Naive thymus-derived CD4-positive, alpha-beta T cell (primary cell): ENCODE measurements at regions of chr12 and their contacts with region 1.

Region 1: DNA sequence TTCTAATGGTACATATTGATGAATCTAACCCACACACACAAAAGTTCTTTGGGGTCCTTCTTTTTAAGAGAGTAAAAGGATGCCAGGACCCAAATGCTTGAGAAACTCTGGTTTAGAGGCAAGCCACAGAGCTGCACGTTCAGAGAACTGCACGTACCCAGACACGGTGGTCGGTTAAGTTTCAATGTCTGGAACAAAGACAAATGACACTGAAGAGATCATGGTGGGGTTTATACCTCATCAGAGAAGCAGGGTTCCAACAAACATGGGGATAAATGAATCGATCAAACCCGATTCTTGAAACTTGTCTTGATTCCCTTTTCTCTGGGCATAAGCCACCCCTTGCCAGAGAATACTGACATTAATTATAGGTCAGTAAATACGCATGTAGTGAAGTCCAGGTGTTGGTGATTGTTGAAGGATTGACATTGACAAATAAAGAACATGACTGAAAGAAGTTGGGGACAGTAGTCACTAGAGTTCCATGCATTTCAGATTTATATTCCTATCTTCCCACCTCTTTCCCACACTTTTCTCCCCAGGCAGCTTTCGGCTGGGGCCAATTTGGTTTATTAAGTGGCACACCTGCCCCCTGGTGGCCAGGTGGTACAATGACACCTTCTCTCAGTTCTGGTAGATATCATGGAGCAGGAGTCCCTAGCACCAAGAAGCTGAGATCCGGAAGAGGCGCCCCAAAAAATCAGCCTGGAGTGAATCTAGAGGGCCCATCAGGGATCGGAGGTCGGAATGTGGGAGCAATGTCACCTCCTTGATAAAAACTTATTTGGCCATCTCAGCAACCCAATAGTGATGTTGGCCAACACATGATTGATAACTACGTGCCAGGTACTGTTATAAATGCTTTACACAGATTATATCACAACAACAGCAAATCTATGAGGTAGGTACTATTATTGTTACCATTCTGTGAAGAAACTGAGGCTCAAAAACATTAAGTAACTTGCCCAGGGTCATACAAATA is 17.8 kb upstream of the HDAC7 start:
- DNase-seq: peak; percentile 52 to 80 (median 65)
- ATAC-seq: peak; percentile 68
- H3K4me3 ChIP-seq: no peak overlapping the region
- H3K4me3 Mint-ChIP-seq: no peak overlapping the region
- H3K27ac ChIP-seq: no peak overlapping the region
- H3K27ac Mint-ChIP-seq: peak overlapping the region in 8 of 9 donors; percentile 35 to 97 (median 76)
- H3K4me1 ChIP-seq: peaks cover 19 to 52% of the 10 kb centered on the region in 2 donors
- H3K4me1 Mint-ChIP-seq: peaks cover 38 to 71% (median 55%) of the 10 kb centered on the region in 7 donors
- H3K27me3 ChIP-seq: no peaks in the 10 kb centered on the region
- H3K27me3 Mint-ChIP-seq: no peaks in the 10 kb centered on the region

Region 2: DNA sequence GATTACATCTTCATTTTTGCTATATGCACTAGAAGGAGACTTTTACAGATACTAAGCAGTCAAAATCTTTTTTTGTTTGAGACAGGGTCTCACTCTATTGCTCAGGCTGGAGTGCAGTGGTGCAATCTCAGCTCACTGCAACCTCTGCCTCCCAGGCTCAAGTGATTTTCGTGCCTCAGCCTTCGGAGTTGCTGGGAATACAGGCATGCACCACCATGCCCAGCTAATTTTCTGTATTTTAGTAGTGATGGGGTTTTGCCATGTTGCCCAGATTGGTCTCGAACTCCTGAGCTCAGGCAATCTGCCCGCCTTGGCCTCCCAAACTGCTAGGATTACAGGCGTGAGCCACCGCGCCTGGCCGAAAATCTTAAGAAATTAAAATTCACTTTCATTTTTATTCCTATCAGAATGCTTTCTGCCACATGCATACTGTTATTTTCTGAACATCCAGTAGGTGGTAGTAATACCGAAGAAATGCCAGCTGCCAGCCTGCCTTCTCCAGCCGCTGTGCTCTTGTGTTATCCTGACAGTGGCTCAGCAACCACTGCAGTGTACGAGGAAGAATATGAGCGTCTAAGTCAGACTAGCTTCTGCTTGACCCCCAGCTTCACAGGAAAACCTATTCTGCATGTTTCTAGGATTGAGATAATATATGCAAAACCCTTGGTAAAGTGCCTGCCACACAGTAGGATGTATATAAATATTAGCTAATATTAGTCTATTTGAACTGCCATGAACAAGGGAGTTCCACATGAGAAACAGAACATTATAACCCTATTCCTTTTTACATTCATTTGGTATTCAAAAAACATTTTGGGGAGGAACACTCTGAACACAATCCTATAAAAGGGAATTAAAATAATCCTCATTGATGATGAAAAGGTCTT is 185.9 kb before region 1 on chr12:
- CTCF ChIA-PET with region 1: interaction called, 6 read pairs
- POLR2A ChIA-PET with region 1: no interaction called
- intact Hi-C with region 1: loop called (anchors 1 to 5 kb)
- DNase-seq: peak in 8 of 9 donors; percentile 39 to 69 (median 56)
- ATAC-seq: peak; percentile 97
- H3K4me3 ChIP-seq: peak overlapping the region; percentile 38
- H3K4me3 Mint-ChIP-seq: peak overlapping the region; percentile 21 to 75 (median 44)
- H3K27ac ChIP-seq: peak overlapping the region; percentile 9
- H3K27ac Mint-ChIP-seq: peak overlapping the region in 8 of 9 donors; percentile 11 to 94 (median 64)
- H3K4me1 ChIP-seq: peaks cover 5 to 6% of the 10 kb centered on the region in 2 donors
- H3K4me1 Mint-ChIP-seq: peaks cover 8 to 21% (median 16%) of the 10 kb centered on the region in 7 donors
- H3K27me3 ChIP-seq: no peaks in the 10 kb centered on the region
- H3K27me3 Mint-ChIP-seq: no peaks in the 10 kb centered on the region

Region 3: DNA sequence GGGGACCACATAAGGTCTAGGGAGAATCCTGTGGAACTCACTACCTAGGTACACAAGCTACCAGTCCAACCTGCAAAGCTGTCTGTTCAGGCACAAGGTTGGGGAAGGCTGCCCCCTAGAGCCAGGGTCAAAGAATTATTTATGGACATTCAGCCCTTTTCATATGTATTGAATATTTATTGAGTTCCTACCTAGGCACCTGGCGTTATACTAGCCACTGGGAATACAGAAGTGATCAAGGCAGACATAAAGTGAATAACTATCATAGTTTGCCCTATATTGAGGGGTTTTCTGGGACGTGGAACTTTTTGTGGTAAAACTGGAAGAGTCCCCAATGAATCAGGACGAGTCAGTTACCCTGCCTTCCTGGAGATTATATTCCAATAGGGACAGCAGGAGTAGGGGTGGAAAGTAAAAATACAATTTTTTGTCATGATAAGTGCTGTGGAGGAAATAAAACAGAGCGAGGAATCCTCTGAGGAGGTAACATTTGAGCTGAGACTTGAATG is 70.2 kb before region 1 on chr12:
- CTCF ChIA-PET with region 1: interaction called, 167 read pairs
- POLR2A ChIA-PET with region 1: interaction called, 5 read pairs
- intact Hi-C with region 1: loop called in 1 of 2 experiments (anchors 1 kb)
- DNase-seq: peak; percentile 40 to 73 (median 57)
- ATAC-seq: peak; percentile 81
- H3K4me3 ChIP-seq: no peak overlapping the region
- H3K4me3 Mint-ChIP-seq: no peak overlapping the region
- H3K27ac ChIP-seq: no peak overlapping the region
- H3K27ac Mint-ChIP-seq: no peak overlapping the region
- H3K4me1 ChIP-seq: peaks cover 3 to 10% of the 10 kb centered on the region in 2 donors
- H3K4me1 Mint-ChIP-seq: peaks cover 0 to 16% (median 5%) of the 10 kb centered on the region in 7 donors
- H3K27me3 ChIP-seq: no peaks in the 10 kb centered on the region
- H3K27me3 Mint-ChIP-seq: peaks cover 0 to 13% (median 0%) of the 10 kb centered on the region in 5 donors

Region 4: GRCh38 chr12:47779301-47779942 is 58.1 kb before region 1 on chr12:
- CTCF ChIA-PET with region 1: interaction called, 167 read pairs
- POLR2A ChIA-PET with region 1: interaction called, 19 read pairs
- intact Hi-C with region 1: loop called (anchors 1 kb)
- DNase-seq: peak; percentile 77 to 96 (median 88)
- ATAC-seq: peak; percentile 95
- H3K4me3 ChIP-seq: no peak overlapping the region
- H3K4me3 Mint-ChIP-seq: no peak overlapping the region
- H3K27ac ChIP-seq: no peak overlapping the region
- H3K27ac Mint-ChIP-seq: peak overlapping the region; percentile 35 to 82 (median 60)
- H3K4me1 ChIP-seq: no peaks in the 10 kb centered on the region
- H3K4me1 Mint-ChIP-seq: peaks cover 19 to 46% (median 25%) of the 10 kb centered on the region in 7 donors
- H3K27me3 ChIP-seq: no peaks in the 10 kb centered on the region
- H3K27me3 Mint-ChIP-seq: no peaks in the 10 kb centered on the region

Region 5: GRCh38 chr12:47819896-47820630 is 17.4 kb before region 1 on chr12 and contains the start of gene HDAC7:
- CTCF ChIA-PET with region 1: interaction called, 539 read pairs
- POLR2A ChIA-PET with region 1: interaction called, 364 read pairs
- intact Hi-C with region 1: loop called (anchors 1 kb)
- DNase-seq: peak; percentile 54 to 79 (median 69)
- ATAC-seq: peak; percentile 76
- H3K4me3 ChIP-seq: peak within 1 kb of the TSS; percentile 82
- H3K4me3 Mint-ChIP-seq: peak within 1 kb of the TSS; percentile 86 to 99 (median 96)
- H3K27ac ChIP-seq: peak within 1 kb of the TSS; percentile 88
- H3K27ac Mint-ChIP-seq: peak within 1 kb of the TSS; percentile 96 to 99 (median 97)
- H3K4me1 ChIP-seq: peaks cover 55 to 73% of the 10 kb centered on the region in 2 donors
- H3K4me1 Mint-ChIP-seq: peaks cover 75 to 87% (median 82%) of the 10 kb centered on the region in 7 donors
- H3K27me3 ChIP-seq: no peaks in the 10 kb centered on the region
- H3K27me3 Mint-ChIP-seq: no peaks in the 10 kb centered on the region
- total RNA-seq, gene HDAC7: 150 to 194 (median 188) TPM

Region 6: DNA sequence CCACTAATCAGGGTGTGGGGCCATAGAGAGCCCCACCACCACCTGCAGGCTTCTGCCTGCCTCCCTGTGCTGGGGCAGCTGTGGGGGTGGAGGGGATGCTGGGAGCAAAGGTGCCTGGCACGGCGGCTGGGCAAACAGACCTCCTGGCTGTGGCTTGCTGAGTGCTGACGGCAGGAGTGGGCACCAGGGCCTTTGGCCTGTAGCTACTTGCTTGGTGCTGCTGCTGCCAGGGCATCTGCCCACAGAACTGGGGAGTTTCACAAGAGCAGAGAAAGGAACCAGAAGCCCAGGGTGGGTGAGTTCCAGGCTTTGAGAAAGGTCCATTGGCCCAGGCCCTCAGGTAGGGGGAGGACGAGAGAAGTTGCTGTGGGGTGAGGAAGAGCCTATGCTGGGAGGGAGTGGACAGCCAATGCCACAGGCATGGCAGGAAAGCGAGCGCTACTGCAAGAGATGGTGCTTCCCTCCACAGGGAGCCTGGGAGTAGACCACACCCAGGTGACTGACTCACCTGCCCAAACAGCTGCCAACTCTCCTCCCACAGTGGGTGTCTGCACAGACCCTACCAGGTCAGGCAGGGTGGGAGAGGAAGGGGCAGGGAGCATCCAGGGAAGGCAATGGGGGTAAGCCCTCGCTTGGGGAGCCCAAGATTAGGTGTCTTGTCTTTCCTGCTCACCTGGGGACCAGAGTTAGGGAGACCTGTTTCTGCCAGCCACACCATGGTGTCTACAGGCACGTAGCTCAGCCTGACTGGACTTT is 21.2 kb after region 1 on chr12:
- CTCF ChIA-PET with region 1: no interaction called
- POLR2A ChIA-PET with region 1: no interaction called
- intact Hi-C with region 1: no loop called
- DNase-seq: no peak
- ATAC-seq: no peak
- H3K4me3 ChIP-seq: no peak overlapping the region
- H3K4me3 Mint-ChIP-seq: no peak overlapping the region
- H3K27ac ChIP-seq: no peak overlapping the region
- H3K27ac Mint-ChIP-seq: peak overlapping the region in 1 of 9 donors; percentile 7
- H3K4me1 ChIP-seq: no peaks in the 10 kb centered on the region
- H3K4me1 Mint-ChIP-seq: peaks cover 0 to 46% (median 4%) of the 10 kb centered on the region in 7 donors
- H3K27me3 ChIP-seq: no peaks in the 10 kb centered on the region
- H3K27me3 Mint-ChIP-seq: no peaks in the 10 kb centered on the region

Region 7: GRCh38 chr12:47920913-47921312 is 83.4 kb after region 1 on chr12:
- CTCF ChIA-PET with region 1: no interaction called
- POLR2A ChIA-PET with region 1: no interaction called
- intact Hi-C with region 1: no loop called
- DNase-seq: peak in 1 of 9 donors; percentile 11
- ATAC-seq: no peak
- H3K4me3 ChIP-seq: no peak overlapping the region
- H3K4me3 Mint-ChIP-seq: no peak overlapping the region
- H3K27ac ChIP-seq: no peak overlapping the region
- H3K27ac Mint-ChIP-seq: no peak overlapping the region
- H3K4me1 ChIP-seq: no peaks in the 10 kb centered on the region
- H3K4me1 Mint-ChIP-seq: no peaks in the 10 kb centered on the region
- H3K27me3 ChIP-seq: no peaks in the 10 kb centered on the region
- H3K27me3 Mint-ChIP-seq: peaks cover 0 to 56% (median 13%) of the 10 kb centered on the region in 5 donors

Region 8: GRCh38 chr12:48084066-48084465 is 246.6 kb after region 1 on chr12:
- CTCF ChIA-PET with region 1: no interaction called
- POLR2A ChIA-PET with region 1: no interaction called
- intact Hi-C with region 1: no loop called
- DNase-seq: no peak
- ATAC-seq: no peak
- H3K4me3 ChIP-seq: no peak overlapping the region
- H3K4me3 Mint-ChIP-seq: no peak overlapping the region
- H3K27ac ChIP-seq: no peak overlapping the region
- H3K27ac Mint-ChIP-seq: no peak overlapping the region
- H3K4me1 ChIP-seq: no peaks in the 10 kb centered on the region
- H3K4me1 Mint-ChIP-seq: peaks cover 0 to 2% (median 0%) of the 10 kb centered on the region in 7 donors
- H3K27me3 ChIP-seq: no peaks in the 10 kb centered on the region
- H3K27me3 Mint-ChIP-seq: no peaks in the 10 kb centered on the region

Region 9: DNA sequence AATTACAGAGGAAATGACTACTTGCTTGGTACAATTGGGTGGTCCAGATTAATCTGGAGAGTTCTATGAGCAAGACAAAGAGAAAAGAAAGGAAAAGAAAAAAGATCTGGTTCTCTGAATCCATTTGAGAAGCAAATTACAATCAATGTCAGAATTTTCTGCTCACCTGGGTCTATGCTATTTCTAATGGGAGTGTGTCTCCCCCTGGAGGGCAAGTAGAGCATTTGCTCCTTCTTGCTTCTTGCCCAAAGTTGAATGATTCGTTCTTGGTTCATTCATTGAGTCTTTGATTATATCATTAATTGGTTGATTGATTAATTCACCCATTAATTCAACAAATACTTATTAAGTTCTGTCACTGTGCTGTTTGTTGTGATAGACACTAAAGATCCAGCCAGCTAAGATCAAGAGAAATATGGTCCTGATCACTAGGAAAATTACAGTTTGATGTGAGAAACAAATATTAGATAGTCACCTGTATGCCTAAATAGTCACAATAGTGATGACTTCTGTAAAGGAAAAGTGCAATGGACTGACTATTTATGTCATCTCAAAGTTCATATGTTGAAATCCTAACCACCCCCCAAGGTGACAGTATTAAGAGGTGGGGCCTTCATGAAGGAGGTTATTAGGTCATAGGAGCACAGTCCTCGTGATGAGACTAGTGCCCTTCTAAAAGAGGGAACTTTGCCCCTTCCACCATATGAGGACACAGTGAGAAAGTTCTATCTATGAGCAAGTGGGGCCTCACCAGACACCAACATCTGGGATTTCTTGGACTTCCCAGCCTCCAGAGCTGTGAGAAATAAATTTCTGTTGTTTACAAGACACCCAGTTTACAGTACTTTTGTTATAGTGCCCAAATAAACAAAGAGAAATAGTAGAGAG is 327.9 kb after region 1 on chr12:
- CTCF ChIA-PET with region 1: interaction called, 6 read pairs
- POLR2A ChIA-PET with region 1: no interaction called
- intact Hi-C with region 1: loop called in 1 of 2 experiments (anchors 1 kb)
- DNase-seq: peak in 7 of 9 donors; percentile 54 to 77 (median 70)
- ATAC-seq: peak; percentile 87
- H3K4me3 ChIP-seq: no peak overlapping the region
- H3K4me3 Mint-ChIP-seq: no peak overlapping the region
- H3K27ac ChIP-seq: no peak overlapping the region
- H3K27ac Mint-ChIP-seq: no peak overlapping the region
- H3K4me1 ChIP-seq: no peaks in the 10 kb centered on the region
- H3K4me1 Mint-ChIP-seq: peaks cover 2 to 16% (median 14%) of the 10 kb centered on the region in 7 donors
- H3K27me3 ChIP-seq: no peaks in the 10 kb centered on the region
- H3K27me3 Mint-ChIP-seq: peaks cover 0 to 33% (median 12%) of the 10 kb centered on the region in 5 donors

Region 10: GRCh38 chr12:48512855-48513254 is 675.4 kb after region 1 on chr12:
- CTCF ChIA-PET with region 1: no interaction called
- POLR2A ChIA-PET with region 1: no interaction called
- intact Hi-C with region 1: no loop called
- DNase-seq: no peak
- ATAC-seq: no peak
- H3K4me3 ChIP-seq: no peak overlapping the region
- H3K4me3 Mint-ChIP-seq: no peak overlapping the region
- H3K27ac ChIP-seq: no peak overlapping the region
- H3K27ac Mint-ChIP-seq: no peak overlapping the region
- H3K4me1 ChIP-seq: no peaks in the 10 kb centered on the region
- H3K4me1 Mint-ChIP-seq: no peaks in the 10 kb centered on the region
- H3K27me3 ChIP-seq: no peaks in the 10 kb centered on the region
- H3K27me3 Mint-ChIP-seq: peaks cover 0 to 5% (median 2%) of the 10 kb centered on the region in 5 donors